Adrenal gland (tissue), 19 donors: ENCODE measurements at regions of chr10 and their contacts with region 1.

Region 1: DNA sequence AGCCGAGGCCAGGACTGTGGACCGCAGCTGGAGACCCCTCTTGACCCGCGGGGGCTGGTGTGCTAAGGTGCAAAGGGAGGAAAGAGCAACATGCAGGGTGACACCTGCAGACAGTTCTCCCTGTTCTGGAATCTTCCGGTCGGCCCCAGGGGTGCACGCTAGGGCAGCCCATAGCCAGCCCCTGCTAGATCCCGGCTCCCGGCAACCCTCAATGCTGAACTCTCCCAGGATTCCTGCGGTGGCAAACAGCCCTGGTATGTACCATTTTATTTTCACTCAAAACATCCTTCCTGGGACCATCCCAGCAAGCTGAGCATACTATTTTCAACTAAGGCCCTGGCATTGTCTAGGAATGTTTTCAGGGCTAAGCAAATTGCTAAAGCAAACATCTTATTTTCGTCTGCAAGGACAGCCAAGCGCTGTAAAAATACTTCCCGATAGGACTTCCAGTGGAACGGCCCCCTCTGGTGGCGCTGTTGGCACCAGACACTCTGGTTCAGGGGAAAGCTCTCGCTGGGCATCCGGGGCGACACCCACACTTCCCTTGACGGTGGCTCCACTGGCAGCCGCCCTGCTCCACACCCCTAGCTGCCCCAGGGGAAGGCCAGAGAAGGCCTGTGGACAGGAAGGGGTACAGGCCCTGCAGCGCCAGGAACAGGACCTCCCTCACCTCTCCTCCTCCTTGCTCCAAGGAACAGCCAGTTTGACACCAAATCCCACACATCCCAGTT is 99.4 kb downstream of the CTBP2 start:
- DNase-seq: peak; percentile 82 to 94 (median 89)
- H3K4me3 ChIP-seq: peak overlapping the region in 1 of 4 donors; percentile 20
- H3K27ac ChIP-seq: peak overlapping the region in 4 of 5 donors; percentile 15 to 95 (median 52)
- H3K4me1 ChIP-seq: peaks cover 44 to 90% of the 10 kb centered on the region in 2 donors
- H3K27me3 ChIP-seq: no peaks in the 10 kb centered on the region
- CTCF ChIP-seq: peak; percentile 81 to 91 (median 86)
- POLR2A ChIP-seq: no peak

Region 2: DNA sequence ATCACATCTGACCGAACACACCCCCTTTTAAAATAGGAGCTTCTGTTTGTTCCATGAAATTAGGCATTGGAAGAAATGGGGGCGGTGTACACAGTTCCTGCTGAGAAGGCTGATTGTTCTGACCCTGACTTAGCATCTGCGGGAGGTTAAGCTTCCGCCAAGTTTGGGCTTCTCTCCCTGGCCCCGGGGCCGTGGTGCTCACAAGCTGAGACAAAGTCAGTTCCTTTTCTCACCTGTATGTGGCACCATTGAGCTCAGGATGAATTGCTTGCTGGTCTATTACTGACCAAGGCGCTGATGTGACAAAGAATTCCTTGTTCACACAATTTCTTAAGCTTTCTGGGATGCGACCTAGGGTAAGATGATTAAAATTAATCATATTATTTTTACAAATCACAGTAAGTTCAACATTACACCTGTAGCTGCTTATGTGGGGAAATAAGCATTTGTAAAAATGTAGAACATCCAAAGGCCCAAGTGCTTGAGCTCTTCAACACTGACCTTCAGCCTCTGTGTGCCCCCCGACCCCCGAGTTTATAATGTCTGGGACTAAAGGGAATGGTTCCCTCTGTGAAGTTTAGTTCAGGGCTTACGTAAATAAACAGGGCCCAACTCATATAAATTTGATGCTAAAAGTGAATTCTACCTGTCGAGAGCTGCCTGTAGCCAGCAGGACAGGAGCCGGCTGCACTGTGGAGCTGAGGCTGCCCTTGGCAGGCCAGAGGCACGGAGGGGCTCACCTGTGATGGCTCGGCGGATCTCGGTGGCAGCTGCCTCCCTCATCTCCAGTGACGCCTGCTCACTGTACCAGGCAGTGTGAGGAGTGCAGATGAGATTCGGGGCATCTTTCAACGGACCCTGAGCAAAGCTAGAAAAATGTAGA is 68.3 kb before region 1 on chr10:
- intact Hi-C with region 1: loop called (anchors 5 to 10 kb)
- DNase-seq: peak; percentile 79 to 92 (median 86)
- H3K4me3 ChIP-seq: no peak overlapping the region
- H3K27ac ChIP-seq: peak overlapping the region in 2 of 5 donors; percentile 44 to 54
- H3K4me1 ChIP-seq: peaks cover 0 to 11% of the 10 kb centered on the region in 2 donors
- H3K27me3 ChIP-seq: no peaks in the 10 kb centered on the region
- CTCF ChIP-seq: peak; percentile 66 to 90 (median 85)
- POLR2A ChIP-seq: no peak

Region 3: GRCh38 chr10:125238682-125239081 is 177.7 kb after region 1 on chr10:
- intact Hi-C with region 1: no loop called
- DNase-seq: no peak
- H3K4me3 ChIP-seq: no peak overlapping the region
- H3K27ac ChIP-seq: no peak overlapping the region
- H3K4me1 ChIP-seq: no peaks in the 10 kb centered on the region
- H3K27me3 ChIP-seq: peaks cover 5% of the 10 kb centered on the region
- CTCF ChIP-seq: no peak
- POLR2A ChIP-seq: no peak

Region 4: GRCh38 chr10:125462845-125463244 is 401.9 kb after region 1 on chr10:
- intact Hi-C with region 1: no loop called
- DNase-seq: no peak
- H3K4me3 ChIP-seq: no peak overlapping the region
- H3K27ac ChIP-seq: no peak overlapping the region
- H3K4me1 ChIP-seq: no peaks in the 10 kb centered on the region
- H3K27me3 ChIP-seq: no peaks in the 10 kb centered on the region
- CTCF ChIP-seq: no peak
- POLR2A ChIP-seq: no peak